Common myeloid progenitor, CD34-positive (primary cell): ENCODE measurements at regions of chr5 and their contacts with region 1.

Region 1: DNA sequence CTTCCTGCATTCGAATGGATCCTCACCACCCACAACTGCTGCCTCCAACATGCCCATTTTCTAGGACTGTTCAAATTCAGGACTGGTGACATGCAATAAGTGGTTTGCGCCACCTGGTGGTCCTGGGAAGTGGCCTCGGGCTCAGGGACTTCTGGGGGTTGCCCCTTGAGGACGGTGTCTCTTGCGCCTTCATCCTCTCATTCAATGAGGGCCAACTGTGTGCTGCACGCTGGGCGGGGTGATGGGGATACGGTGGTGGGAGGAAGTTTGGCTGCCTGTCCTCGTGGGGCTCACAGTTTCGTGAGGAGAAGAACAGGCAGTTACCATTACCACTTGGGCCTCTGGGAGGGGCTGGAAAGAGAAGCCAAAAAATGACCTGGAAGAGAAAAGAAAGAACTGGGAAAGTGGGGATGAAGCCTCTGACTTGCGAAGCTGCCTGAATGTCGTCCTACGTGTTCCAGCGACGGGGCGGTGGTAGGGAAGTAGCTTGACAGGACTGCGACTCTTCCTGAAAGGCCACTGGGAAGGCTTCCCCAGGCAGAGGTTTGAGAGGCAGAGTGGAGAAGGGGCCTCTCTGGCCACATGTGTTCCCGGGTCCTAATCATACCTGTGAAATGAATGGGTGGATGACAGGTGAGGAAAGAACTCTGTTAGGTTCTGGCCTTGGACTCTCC is 49.0 kb downstream of the PSD2 start:
- DNase-seq: peak; percentile 86 to 90 (median 89)
- H3K4me3 ChIP-seq: no peak overlapping the region
- H3K27ac ChIP-seq: no peak overlapping the region
- H3K4me1 ChIP-seq: peaks cover 0 to 16% (median 9%) of the 10 kb centered on the region in 4 experiments
- H3K27me3 ChIP-seq: peaks cover 0 to 35% (median 21%) of the 10 kb centered on the region in 5 experiments

Region 2: GRCh38 chr5:139684881-139685749 is 159.5 kb before region 1 on chr5:
- CTCF ChIA-PET with region 1: no interaction called
- POLR2A ChIA-PET with region 1: no interaction called
- DNase-seq: no peak
- H3K4me3 ChIP-seq: no peak overlapping the region
- H3K27ac ChIP-seq: no peak overlapping the region
- H3K4me1 ChIP-seq: peaks cover 2 to 77% (median 64%) of the 10 kb centered on the region in 4 experiments
- H3K27me3 ChIP-seq: no peaks in the 10 kb centered on the region

Region 3: GRCh38 chr5:139745800-139746690 is 98.6 kb before region 1 on chr5:
- CTCF ChIA-PET with region 1: no interaction called
- POLR2A ChIA-PET with region 1: no interaction called
- DNase-seq: peak; percentile 57 to 75 (median 75)
- H3K4me3 ChIP-seq: peak overlapping the region in 3 of 7 experiments; percentile 33 to 68 (median 54)
- H3K27ac ChIP-seq: no peak overlapping the region
- H3K4me1 ChIP-seq: peaks cover 0 to 45% (median 41%) of the 10 kb centered on the region in 4 experiments
- H3K27me3 ChIP-seq: peaks cover 0 to 49% (median 21%) of the 10 kb centered on the region in 5 experiments

Region 4: DNA sequence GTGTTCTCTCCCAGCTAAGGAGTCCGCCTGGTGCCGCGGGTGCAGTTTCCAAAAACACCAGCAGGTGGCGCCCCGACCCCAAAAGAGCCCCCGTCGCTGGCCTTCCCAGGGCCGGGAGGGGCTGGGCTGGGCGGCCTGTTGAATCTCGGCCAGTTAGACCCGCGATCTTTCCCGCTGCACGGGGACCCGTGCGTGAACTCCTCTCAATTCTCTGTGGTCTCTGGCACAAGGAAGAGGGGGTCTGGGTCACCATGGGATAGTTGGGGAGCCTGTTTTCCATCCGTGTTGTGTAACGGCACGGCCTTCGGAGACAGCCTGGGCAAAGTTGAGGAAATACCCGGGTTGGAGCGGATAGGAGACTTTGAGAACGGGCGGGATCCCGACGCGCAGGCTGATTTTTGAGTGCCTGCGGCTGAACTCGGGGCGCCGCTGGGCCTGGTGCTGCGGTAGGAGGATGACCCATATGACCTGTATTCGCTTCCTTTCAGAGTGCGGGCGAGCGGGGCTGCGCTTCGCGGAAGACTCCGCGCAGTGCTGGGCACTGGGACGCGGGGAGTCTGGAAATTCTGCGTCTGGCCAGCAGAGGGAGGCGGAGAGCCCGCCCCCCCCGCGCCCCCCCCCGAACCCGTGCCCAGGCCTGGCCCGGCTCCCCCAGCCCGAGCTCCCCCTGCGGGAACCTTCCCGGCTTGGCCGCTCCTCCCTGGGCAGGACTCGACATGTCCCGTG is 56.9 kb before region 1 on chr5:
- CTCF ChIA-PET with region 1: interaction called, 28 read pairs
- POLR2A ChIA-PET with region 1: no interaction called
- DNase-seq: peak; percentile 69 to 78 (median 71)
- H3K4me3 ChIP-seq: peak overlapping the region; percentile 49 to 87 (median 73)
- H3K27ac ChIP-seq: no peak overlapping the region
- H3K4me1 ChIP-seq: peaks cover 0 to 9% (median 8%) of the 10 kb centered on the region in 4 experiments
- H3K27me3 ChIP-seq: peaks cover 0 to 18% (median 4%) of the 10 kb centered on the region in 5 experiments

Region 5: GRCh38 chr5:139796061-139796806 is 48.4 kb before region 1 on chr5:
- CTCF ChIA-PET with region 1: interaction called, 14 read pairs
- POLR2A ChIA-PET with region 1: no interaction called
- DNase-seq: peak in 1 of 3 donors; percentile 23
- H3K4me3 ChIP-seq: peak overlapping the region in 2 of 7 experiments; percentile 13 to 40
- H3K27ac ChIP-seq: no peak overlapping the region
- H3K4me1 ChIP-seq: peaks cover 0 to 10% (median 3%) of the 10 kb centered on the region in 4 experiments
- H3K27me3 ChIP-seq: peaks cover 7 to 78% (median 36%) of the 10 kb centered on the region in 5 experiments

Region 6: GRCh38 chr5:139856714-139857113 is 12.1 kb after region 1 on chr5:
- CTCF ChIA-PET with region 1: interaction called, 16 read pairs
- POLR2A ChIA-PET with region 1: no interaction called
- DNase-seq: no peak
- H3K4me3 ChIP-seq: no peak overlapping the region
- H3K27ac ChIP-seq: no peak overlapping the region
- H3K4me1 ChIP-seq: no peaks in the 10 kb centered on the region
- H3K27me3 ChIP-seq: peaks cover 0 to 13% (median 0%) of the 10 kb centered on the region in 5 experiments

Region 7: GRCh38 chr5:141465351-141465750 is 1620.7 kb after region 1 on chr5:
- CTCF ChIA-PET with region 1: no interaction called
- POLR2A ChIA-PET with region 1: no interaction called
- DNase-seq: no peak
- H3K4me3 ChIP-seq: no peak overlapping the region
- H3K27ac ChIP-seq: no peak overlapping the region
- H3K4me1 ChIP-seq: no peaks in the 10 kb centered on the region
- H3K27me3 ChIP-seq: peaks cover 0 to 1% (median 0%) of the 10 kb centered on the region in 5 experiments